Left cardiac atrium (tissue), 4 donors: ENCODE measurements at regions of chrX and their contacts with region 1.

Region 1: DNA sequence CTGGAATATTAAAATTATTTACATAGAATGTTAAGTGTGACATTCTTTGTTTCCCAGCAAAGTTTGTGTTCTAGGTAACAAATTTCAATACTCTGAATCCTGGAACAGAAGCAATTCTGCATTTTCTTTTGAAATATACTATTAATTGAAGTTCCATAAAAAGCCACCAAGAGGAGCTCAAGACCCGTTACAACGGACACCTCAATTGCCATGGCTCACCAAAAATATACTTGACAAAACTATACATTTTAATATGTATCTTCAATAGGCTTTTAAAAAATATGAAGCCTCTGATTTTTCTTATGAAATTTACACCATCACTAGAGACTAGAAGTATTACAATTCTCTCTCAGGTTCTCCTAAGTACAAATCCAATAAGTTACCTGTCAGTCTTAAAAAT is 111.4 kb downstream of the NYX start:
- DNase-seq: no peak
- ATAC-seq: peak in 1 of 2 donors; percentile 30

Region 2: DNA sequence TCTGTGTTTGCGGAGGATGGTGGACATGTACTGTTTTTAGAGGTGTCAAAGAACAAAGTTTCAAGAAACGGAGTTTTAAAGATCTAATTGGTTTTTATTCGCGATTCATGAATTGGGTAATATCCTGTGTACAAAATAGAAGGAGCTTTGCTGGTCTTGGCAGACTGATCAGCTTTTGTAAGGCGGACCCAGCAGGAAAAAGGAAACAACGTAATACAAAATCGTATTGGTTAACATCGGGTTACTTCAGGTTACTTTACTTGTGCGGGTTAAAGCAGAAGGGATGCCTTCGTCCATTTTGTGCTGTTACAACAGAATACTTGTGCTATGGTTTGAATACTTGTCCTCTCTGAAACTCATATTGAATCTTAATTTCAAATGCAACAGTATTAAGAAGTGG is 122.8 kb before region 1 on chrX:
- intact Hi-C with region 1: no loop called
- DNase-seq: no peak
- ATAC-seq: peak; percentile 19 to 52

Region 3: GRCh38 chrX:41759817-41760216 is 201.3 kb after region 1 on chrX:
- intact Hi-C with region 1: loop called in 1 of 2 experiments (anchors 2 kb)
- DNase-seq: no peak
- ATAC-seq: no peak